ENCODE measurements at regions of chr17 and their contacts with region 1.

Region 1: GRCh38 chr17:16380640-16381495 is at the start of gene UBB:
- DNase-seq: peak; percentile 98
- H3K4me3 ChIP-seq: peak within 1 kb of the TSS; percentile 94
- H3K27ac ChIP-seq: peak within 1 kb of the TSS; percentile 73
- H3K4me1 ChIP-seq: peaks cover 30% of the 10 kb centered on the region
- CTCF ChIP-seq: peak; percentile 42
- total RNA-seq, gene UBB: 2,854 and 2,972 TPM in 2 replicates

Region 2: GRCh38 chr17:16215273-16215964 is 165.4 kb before region 1 on chr17 and contains the start of gene NCOR1:
- CTCF ChIA-PET with region 1: no interaction called
- POLR2A ChIA-PET with region 1: interaction called, 3 read pairs
- intact Hi-C with region 1: loop called (anchors 2 kb)
- DNase-seq: peak; percentile 93
- H3K4me3 ChIP-seq: peak within 1 kb of the TSS; percentile 75
- H3K27ac ChIP-seq: peak within 1 kb of the TSS; percentile 87
- H3K4me1 ChIP-seq: peaks cover 20% of the 10 kb centered on the region
- CTCF ChIP-seq: peak; percentile 50
- total RNA-seq, gene NCOR1: 68.0 and 80.6 TPM in 2 replicates

Region 3: DNA sequence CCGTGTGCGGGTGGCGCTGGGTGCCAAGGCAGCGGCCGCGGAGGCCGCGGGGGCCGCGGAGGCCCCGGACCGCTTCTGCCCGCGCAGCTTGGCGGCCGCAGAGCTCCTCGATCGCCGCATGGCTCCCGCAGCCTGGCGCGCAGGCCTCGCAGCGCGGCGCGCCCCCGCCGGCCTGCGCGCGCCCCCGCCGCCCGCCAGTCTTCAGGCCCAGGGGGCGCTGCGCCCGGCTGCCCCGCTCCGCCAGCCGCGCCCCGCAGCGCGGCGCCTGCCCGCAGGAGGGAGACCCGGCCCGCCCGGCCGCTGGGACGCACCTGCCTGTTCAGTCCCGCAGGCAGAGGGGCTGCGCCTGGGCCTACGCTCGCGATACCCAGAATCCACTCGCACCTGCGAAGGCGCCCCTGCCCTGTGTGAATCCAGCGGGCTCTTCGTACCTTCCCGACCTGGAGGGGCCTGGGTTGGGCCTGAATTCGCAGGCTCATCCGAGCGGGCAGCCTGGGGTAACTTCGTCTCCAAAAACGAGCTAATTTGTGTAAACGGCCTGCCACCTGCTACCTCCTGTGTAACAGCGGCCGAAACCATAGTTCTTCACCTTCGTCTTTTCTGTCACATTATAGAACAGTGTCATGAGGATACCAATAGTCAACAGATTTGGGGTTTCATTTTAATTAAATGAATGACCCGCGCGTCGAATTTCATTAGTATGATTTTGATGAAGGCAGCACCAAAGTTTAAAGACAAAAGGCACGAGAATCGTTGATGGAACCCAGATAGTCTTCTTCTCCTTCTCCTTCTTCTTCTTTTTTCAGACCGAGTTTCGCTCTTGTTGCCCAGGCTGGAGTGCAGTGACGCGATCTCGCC is 27.3 kb before region 1 on chr17 and contains the start of gene CENPV:
- CTCF ChIA-PET with region 1: no interaction called
- POLR2A ChIA-PET with region 1: interaction called, 3 read pairs
- intact Hi-C with region 1: loop called (anchors 2 kb)
- DNase-seq: peak; percentile 85
- H3K4me3 ChIP-seq: peak within 1 kb of the TSS; percentile 72
- H3K27ac ChIP-seq: peak within 1 kb of the TSS; percentile 59
- H3K4me1 ChIP-seq: peaks cover 35% of the 10 kb centered on the region
- CTCF ChIP-seq: 0 out of 2 replicates have a peak, but pooled peaks have one; percentile 28
- total RNA-seq, gene CENPV: 71.9 and 77.3 TPM in 2 replicates

Region 4: GRCh38 chr17:16415031-16415924 is 34.4 kb after region 1 on chr17 and contains the start of gene TRPV2:
- CTCF ChIA-PET with region 1: interaction called, 6 read pairs
- POLR2A ChIA-PET with region 1: interaction called, 6 read pairs
- intact Hi-C with region 1: loop called (anchors 1 kb)
- DNase-seq: peak; percentile 80
- H3K4me3 ChIP-seq: peak within 1 kb of the TSS; percentile 71
- H3K27ac ChIP-seq: peak within 1 kb of the TSS; percentile 5
- H3K4me1 ChIP-seq: peaks cover 35% of the 10 kb centered on the region
- CTCF ChIP-seq: peak; percentile 85
- total RNA-seq, gene TRPV2: 10.5 and 15.4 TPM in 2 replicates

Region 5: GRCh38 chr17:16438557-16439302 is 57.9 kb after region 1 on chr17:
- CTCF ChIA-PET with region 1: interaction called, 3 read pairs
- POLR2A ChIA-PET with region 1: interaction called, 10 read pairs
- intact Hi-C with region 1: loop called (anchors 2 kb)
- DNase-seq: peak; percentile 100
- H3K4me3 ChIP-seq: peak overlapping the region; percentile 98
- H3K27ac ChIP-seq: peak overlapping the region; percentile 87
- H3K4me1 ChIP-seq: peaks cover 33% of the 10 kb centered on the region
- CTCF ChIP-seq: no peak

Region 6: GRCh38 chr17:16463358-16464302 is 82.8 kb after region 1 on chr17:
- CTCF ChIA-PET with region 1: no interaction called
- POLR2A ChIA-PET with region 1: no interaction called
- intact Hi-C with region 1: no loop called
- DNase-seq: no peak
- H3K4me3 ChIP-seq: no peak overlapping the region
- H3K27ac ChIP-seq: no peak overlapping the region
- H3K4me1 ChIP-seq: no peaks in the 10 kb centered on the region
- CTCF ChIP-seq: no peak

Region 7: DNA sequence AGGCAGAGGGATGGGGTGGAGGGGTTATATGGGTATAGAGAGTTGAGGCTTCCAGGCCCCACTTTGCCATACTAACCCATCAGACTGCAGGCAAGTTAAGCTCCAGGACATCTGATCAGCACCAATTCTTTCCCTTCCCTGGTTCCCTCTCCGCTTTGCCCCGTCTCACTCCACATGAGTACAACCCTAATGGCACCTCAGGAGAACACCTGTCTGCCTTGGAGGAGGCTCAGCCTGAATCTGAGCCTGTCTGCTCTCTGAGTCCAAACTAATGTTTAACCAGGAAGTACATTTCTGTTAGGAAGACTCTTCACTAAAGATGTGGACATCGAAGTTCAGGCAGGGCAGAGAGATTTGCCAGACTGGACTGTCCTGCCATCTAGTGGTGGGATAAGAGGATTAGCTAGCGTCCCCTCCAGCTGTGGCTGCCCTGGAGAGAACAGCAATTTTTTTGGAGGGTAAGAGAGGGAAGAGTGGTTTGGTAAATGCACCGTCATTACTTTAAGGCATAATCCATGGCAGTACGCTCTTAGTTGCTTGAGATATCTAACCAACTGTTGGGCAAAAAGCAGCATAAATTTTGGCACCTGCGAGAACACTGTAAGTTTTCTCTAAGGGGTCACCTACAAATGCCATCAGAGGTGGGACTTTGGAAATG is 140.3 kb after region 1 on chr17:
- CTCF ChIA-PET with region 1: no interaction called
- POLR2A ChIA-PET with region 1: no interaction called
- intact Hi-C with region 1: loop called (anchors 1 kb)
- DNase-seq: peak; percentile 87
- H3K4me3 ChIP-seq: no peak overlapping the region
- H3K27ac ChIP-seq: no peak overlapping the region
- H3K4me1 ChIP-seq: peaks cover 3% of the 10 kb centered on the region
- CTCF ChIP-seq: peak; percentile 97

Measured in OCI-LY7 (cell line).